CD8-positive, alpha-beta T cell (primary cell): ENCODE measurements at regions of chr14 and their contacts with region 1.

Region 1: GRCh38 chr14:106766145-106766544 is 1239.8 kb downstream of the TMEM121 start:
- DNase-seq: no peak
- ATAC-seq: no peak
- H3K4me3 ChIP-seq: no peak overlapping the region
- H3K4me3 Mint-ChIP-seq: no peak overlapping the region
- H3K27ac ChIP-seq: no peak overlapping the region
- H3K27ac Mint-ChIP-seq: no peak overlapping the region
- H3K4me1 ChIP-seq: peaks cover 18% of the 10 kb centered on the region
- H3K4me1 Mint-ChIP-seq: peaks cover 43% of the 10 kb centered on the region
- H3K27me3 ChIP-seq: no peaks in the 10 kb centered on the region
- H3K27me3 Mint-ChIP-seq: no peaks in the 10 kb centered on the region
- CTCF ChIP-seq: no peak

Region 2: GRCh38 chr14:106564058-106564656 is 202.0 kb before region 1 on chr14:
- CTCF ChIA-PET with region 1: no interaction called
- POLR2A ChIA-PET with region 1: no interaction called
- intact Hi-C with region 1: no loop called
- DNase-seq: peak; percentile 26 to 77 (median 67)
- ATAC-seq: peak; percentile 83
- H3K4me3 ChIP-seq: no peak overlapping the region
- H3K4me3 Mint-ChIP-seq: no peak overlapping the region
- H3K27ac ChIP-seq: no peak overlapping the region
- H3K27ac Mint-ChIP-seq: no peak overlapping the region
- H3K4me1 ChIP-seq: no peaks in the 10 kb centered on the region
- H3K4me1 Mint-ChIP-seq: no peaks in the 10 kb centered on the region
- H3K27me3 ChIP-seq: peaks cover 0 to 2% of the 10 kb centered on the region in 2 experiments
- H3K27me3 Mint-ChIP-seq: peaks cover 18% of the 10 kb centered on the region
- CTCF ChIP-seq: peak; percentile 77

Region 3: DNA sequence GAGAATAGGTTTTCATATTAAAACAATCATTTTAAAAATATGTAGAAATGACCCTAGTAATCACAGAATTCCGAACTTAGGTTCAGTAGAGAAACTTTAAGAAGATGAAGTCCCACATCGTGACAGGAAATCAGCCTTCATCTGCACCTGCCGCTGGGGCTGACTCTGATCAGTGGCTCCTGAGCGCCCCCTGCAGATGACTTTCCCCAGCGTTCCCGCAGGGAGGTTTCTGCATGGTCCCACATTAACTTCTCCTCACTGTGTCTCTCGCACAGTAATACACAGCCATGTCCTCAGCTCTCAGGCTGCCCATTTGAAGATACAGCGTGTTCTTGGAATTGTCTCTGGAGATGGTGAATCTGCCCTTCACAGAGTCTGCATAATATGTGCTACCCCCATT is 108.7 kb before region 1 on chr14:
- CTCF ChIA-PET with region 1: interaction called, 5 read pairs
- POLR2A ChIA-PET with region 1: no interaction called
- intact Hi-C with region 1: loop called in 1 of 2 experiments (anchors 1 kb)
- DNase-seq: peak in 8 of 9 experiments; percentile 31 to 77 (median 68)
- ATAC-seq: peak; percentile 73
- H3K4me3 ChIP-seq: no peak overlapping the region
- H3K4me3 Mint-ChIP-seq: no peak overlapping the region
- H3K27ac ChIP-seq: no peak overlapping the region
- H3K27ac Mint-ChIP-seq: no peak overlapping the region
- H3K4me1 ChIP-seq: peaks cover 3% of the 10 kb centered on the region
- H3K4me1 Mint-ChIP-seq: peaks cover 22% of the 10 kb centered on the region
- H3K27me3 ChIP-seq: no peaks in the 10 kb centered on the region
- H3K27me3 Mint-ChIP-seq: peaks cover under 1% of the 10 kb centered on the region
- CTCF ChIP-seq: peak; percentile 77

Region 4: DNA sequence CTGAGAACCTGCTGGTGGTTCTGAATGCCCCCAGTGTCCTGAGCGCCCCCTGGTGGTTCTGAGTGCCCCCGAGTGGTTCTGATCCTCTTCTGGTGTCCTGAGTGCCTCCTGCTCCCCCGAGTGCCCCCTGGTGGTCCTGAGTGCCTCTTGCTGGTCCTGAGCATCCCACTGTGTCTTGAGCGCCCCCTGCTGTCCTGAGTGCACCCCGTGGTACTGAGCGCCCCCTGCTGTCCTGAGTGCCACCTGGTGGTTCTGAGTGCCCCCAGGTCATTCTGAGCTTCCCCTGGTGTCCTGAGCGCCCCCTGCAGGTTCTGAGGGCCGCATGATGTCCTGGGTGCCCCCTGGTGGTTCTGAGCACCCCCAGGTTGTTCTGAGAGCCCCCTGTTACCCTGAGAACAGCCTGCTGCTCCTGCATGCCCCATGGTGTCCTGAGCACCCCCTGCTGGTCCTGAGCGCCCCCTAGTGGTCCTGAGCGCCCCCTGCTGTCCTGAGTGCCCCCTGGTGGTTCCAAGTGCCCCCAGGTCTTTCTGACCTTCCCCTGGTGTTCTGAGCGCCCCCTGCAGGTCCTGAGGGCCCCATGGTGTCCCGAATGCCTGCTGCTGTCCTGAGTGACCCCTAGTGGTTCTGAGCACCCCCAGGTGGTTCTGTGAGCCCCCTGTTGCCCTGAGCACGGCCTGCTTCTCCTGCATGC is 74.4 kb before region 1 on chr14:
- CTCF ChIA-PET with region 1: no interaction called
- POLR2A ChIA-PET with region 1: no interaction called
- intact Hi-C with region 1: no loop called
- DNase-seq: peak in 7 of 9 experiments; percentile 22 to 77 (median 69)
- ATAC-seq: peak; percentile 18
- H3K4me3 ChIP-seq: no peak overlapping the region
- H3K4me3 Mint-ChIP-seq: no peak overlapping the region
- H3K27ac ChIP-seq: no peak overlapping the region
- H3K27ac Mint-ChIP-seq: no peak overlapping the region
- H3K4me1 ChIP-seq: no peaks in the 10 kb centered on the region
- H3K4me1 Mint-ChIP-seq: peaks cover 24% of the 10 kb centered on the region
- H3K27me3 ChIP-seq: no peaks in the 10 kb centered on the region
- H3K27me3 Mint-ChIP-seq: no peaks in the 10 kb centered on the region
- CTCF ChIP-seq: peak; percentile 15

Region 5: GRCh38 chr14:106738075-106738474 is 28.1 kb before region 1 on chr14:
- CTCF ChIA-PET with region 1: interaction called, 14 read pairs
- POLR2A ChIA-PET with region 1: no interaction called
- intact Hi-C with region 1: loop called in 1 of 2 experiments (anchors 2 kb)
- DNase-seq: peak in 4 of 9 experiments; percentile 44 to 63 (median 56)
- ATAC-seq: no peak
- H3K4me3 ChIP-seq: no peak overlapping the region
- H3K4me3 Mint-ChIP-seq: no peak overlapping the region
- H3K27ac ChIP-seq: no peak overlapping the region
- H3K27ac Mint-ChIP-seq: no peak overlapping the region
- H3K4me1 ChIP-seq: no peaks in the 10 kb centered on the region
- H3K4me1 Mint-ChIP-seq: peaks cover 21% of the 10 kb centered on the region
- H3K27me3 ChIP-seq: no peaks in the 10 kb centered on the region
- H3K27me3 Mint-ChIP-seq: no peaks in the 10 kb centered on the region
- CTCF ChIP-seq: peak; percentile 54